GM12878 (cell line): ENCODE measurements at regions of chr13 and their contacts with region 1.

Region 1: DNA sequence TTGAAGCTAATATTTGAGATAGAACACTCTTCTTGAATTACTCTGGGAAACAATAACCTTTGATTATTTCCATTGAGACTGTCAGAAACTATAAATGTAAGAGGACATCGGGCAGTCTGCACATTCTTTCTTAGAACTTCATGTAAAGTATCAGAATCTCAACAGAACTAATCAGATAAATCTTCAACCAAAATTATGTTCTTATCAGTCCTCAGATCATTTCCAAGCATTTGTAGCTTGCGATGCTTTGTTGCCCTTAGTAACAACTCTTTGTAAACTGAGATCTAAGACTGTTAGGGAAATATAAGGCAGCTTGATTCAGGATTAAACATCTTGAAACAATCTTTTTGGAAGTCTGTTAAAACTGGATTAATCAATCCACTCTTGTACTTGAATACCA is 70.3 kb downstream of the FNDC3A start:
- DNase-seq: no peak
- ATAC-seq: no peak
- H3K4me3 ChIP-seq: no peak overlapping the region
- H3K27ac ChIP-seq: no peak overlapping the region
- H3K4me1 ChIP-seq: no peaks in the 10 kb centered on the region
- H3K27me3 ChIP-seq: no peaks in the 10 kb centered on the region
- CTCF ChIP-seq: no peak
- EP300 ChIP-seq: no peak
- POLR2A ChIP-seq: no peak
- RAD21 ChIP-seq: no peak

Region 2: DNA sequence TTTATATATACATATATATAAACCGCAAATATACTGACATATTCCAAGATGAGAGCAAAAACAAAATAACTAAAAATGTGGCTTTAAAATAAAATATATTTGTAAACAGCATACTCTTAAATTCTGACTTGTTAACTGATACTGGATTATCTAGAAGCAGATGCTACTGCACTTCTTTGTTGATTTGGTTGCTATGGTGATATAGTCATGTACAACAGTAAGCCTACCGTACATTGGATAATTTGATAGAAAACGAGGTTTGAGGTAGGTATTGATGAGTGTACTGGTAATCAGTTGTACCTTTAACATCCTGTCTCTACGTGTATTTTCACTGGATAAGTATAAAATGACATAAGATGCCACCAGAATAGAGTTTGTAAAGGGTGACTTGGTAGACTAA is 12.9 kb before region 1 on chr13:
- CTCF ChIA-PET with region 1: interaction called, 10 read pairs
- POLR2A ChIA-PET with region 1: no interaction called
- RAD21 ChIA-PET with region 1: no interaction called
- SMC1A ChIA-PET with region 1: no interaction called
- in situ Hi-C with region 1: no loop called
- intact Hi-C with region 1: no loop called
- DNase-seq: no peak
- ATAC-seq: no peak
- H3K4me3 ChIP-seq: no peak overlapping the region
- H3K27ac ChIP-seq: no peak overlapping the region
- H3K4me1 ChIP-seq: no peaks in the 10 kb centered on the region
- H3K27me3 ChIP-seq: no peaks in the 10 kb centered on the region
- CTCF ChIP-seq: no peak
- EP300 ChIP-seq: no peak
- POLR2A ChIP-seq: no peak
- RAD21 ChIP-seq: no peak